CD4-positive, alpha-beta memory T cell (primary cell): ENCODE measurements at regions of chr3 and their contacts with region 1.

Region 1: DNA sequence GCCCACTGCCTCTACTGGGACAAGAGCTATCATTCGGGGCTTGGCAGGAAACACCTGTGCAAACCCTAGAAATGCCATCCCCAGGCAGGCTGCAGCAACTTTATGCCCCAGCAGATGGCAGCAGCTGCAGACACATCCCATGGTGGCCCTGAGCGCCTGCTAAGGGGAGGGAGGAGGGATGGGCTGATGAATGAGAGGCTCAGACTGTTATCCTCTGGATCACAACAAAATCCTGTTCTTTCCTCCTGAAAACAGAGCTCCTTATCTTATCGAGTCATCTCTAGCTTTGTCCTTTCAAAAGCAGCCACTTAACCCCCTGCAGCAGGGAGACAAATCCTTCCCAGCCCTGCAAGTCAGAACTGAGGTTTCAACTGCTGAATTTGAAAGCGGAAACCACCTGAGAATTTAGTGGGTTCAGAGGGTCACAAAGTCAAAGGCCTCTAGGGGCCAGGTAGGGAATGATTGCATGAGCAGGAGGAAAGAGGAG is 90.6 kb upstream of the PROK2 start:
- DNase-seq: peak; percentile 65 to 73 (median 68)
- H3K4me3 ChIP-seq: no peak overlapping the region
- H3K4me3 Mint-ChIP-seq: peak overlapping the region in 1 of 8 donors; percentile 43
- H3K27ac ChIP-seq: no peak overlapping the region
- H3K27ac Mint-ChIP-seq: no peak overlapping the region
- H3K4me1 ChIP-seq: peaks cover 26% of the 10 kb centered on the region
- H3K4me1 Mint-ChIP-seq: peaks cover 18 to 24% (median 20%) of the 10 kb centered on the region in 4 donors
- H3K27me3 ChIP-seq: no peaks in the 10 kb centered on the region
- H3K27me3 Mint-ChIP-seq: peaks cover 3 to 5% of the 10 kb centered on the region in 2 donors

Region 2: DNA sequence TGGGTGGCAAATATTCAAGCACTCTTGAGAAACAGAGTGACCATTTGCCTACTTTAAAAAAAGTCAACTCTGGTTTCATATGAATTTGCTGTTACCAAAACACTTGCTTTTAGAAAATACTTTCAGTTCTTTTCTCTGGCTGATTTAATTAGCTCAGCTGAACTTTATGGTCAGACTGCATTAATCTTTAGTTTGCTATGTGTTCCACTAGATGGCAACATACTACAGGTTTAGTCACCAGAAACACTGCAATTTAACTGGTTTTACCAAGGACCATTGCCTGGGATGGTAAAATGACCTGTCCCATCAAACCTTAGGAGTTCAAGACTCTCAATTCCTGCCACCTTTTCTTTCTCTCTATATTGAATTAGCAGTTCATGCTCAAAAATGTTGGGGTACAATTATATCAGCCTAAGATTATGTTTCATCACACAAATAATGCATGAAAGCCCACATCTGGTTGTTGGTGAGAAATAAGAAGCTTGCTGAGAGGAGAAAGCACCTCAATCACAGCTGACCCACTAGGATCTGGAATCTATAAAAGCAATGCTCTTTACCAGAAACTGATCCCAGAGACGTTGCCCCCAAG is 164.5 kb before region 1 on chr3:
- CTCF ChIA-PET with region 1: interaction called, 24 read pairs
- POLR2A ChIA-PET with region 1: interaction called, 5 read pairs
- intact Hi-C with region 1: loop called (anchors 1 kb)
- DNase-seq: peak in 4 of 5 donors; percentile 50 to 59 (median 56)
- H3K4me3 ChIP-seq: no peak overlapping the region
- H3K4me3 Mint-ChIP-seq: peak overlapping the region in 3 of 8 donors; percentile 25 to 47 (median 25)
- H3K27ac ChIP-seq: no peak overlapping the region
- H3K27ac Mint-ChIP-seq: peak overlapping the region in 3 of 7 donors; percentile 80 to 83 (median 81)
- H3K4me1 ChIP-seq: peaks cover 87% of the 10 kb centered on the region
- H3K4me1 Mint-ChIP-seq: peaks cover 66 to 92% (median 74%) of the 10 kb centered on the region in 4 donors
- H3K27me3 ChIP-seq: no peaks in the 10 kb centered on the region
- H3K27me3 Mint-ChIP-seq: no peaks in the 10 kb centered on the region

Region 3: GRCh38 chr3:71854096-71854495 is 21.4 kb before region 1 on chr3:
- CTCF ChIA-PET with region 1: interaction called, 33 read pairs
- POLR2A ChIA-PET with region 1: no interaction called
- intact Hi-C with region 1: no loop called
- DNase-seq: no peak
- H3K4me3 ChIP-seq: no peak overlapping the region
- H3K4me3 Mint-ChIP-seq: no peak overlapping the region
- H3K27ac ChIP-seq: no peak overlapping the region
- H3K27ac Mint-ChIP-seq: no peak overlapping the region
- H3K4me1 ChIP-seq: peaks cover 7% of the 10 kb centered on the region
- H3K4me1 Mint-ChIP-seq: peaks cover 3 to 8% (median 6%) of the 10 kb centered on the region in 4 donors
- H3K27me3 ChIP-seq: no peaks in the 10 kb centered on the region
- H3K27me3 Mint-ChIP-seq: peaks cover 2 to 6% of the 10 kb centered on the region in 2 donors

Region 4: GRCh38 chr3:71859123-71859519 is 16.4 kb before region 1 on chr3:
- CTCF ChIA-PET with region 1: interaction called, 33 read pairs
- POLR2A ChIA-PET with region 1: no interaction called
- intact Hi-C with region 1: no loop called
- DNase-seq: peak; percentile 33 to 68 (median 64)
- H3K4me3 ChIP-seq: no peak overlapping the region
- H3K4me3 Mint-ChIP-seq: peak overlapping the region in 1 of 8 donors; percentile 21
- H3K27ac ChIP-seq: no peak overlapping the region
- H3K27ac Mint-ChIP-seq: peak overlapping the region in 1 of 7 donors; percentile 33
- H3K4me1 ChIP-seq: peaks cover 7% of the 10 kb centered on the region
- H3K4me1 Mint-ChIP-seq: peaks cover 5 to 11% (median 7%) of the 10 kb centered on the region in 4 donors
- H3K27me3 ChIP-seq: no peaks in the 10 kb centered on the region
- H3K27me3 Mint-ChIP-seq: peaks cover 17 to 26% of the 10 kb centered on the region in 2 donors

Region 5: GRCh38 chr3:71891483-71891882 is 16.0 kb after region 1 on chr3:
- CTCF ChIA-PET with region 1: interaction called, 17 read pairs
- POLR2A ChIA-PET with region 1: no interaction called
- intact Hi-C with region 1: no loop called
- DNase-seq: no peak
- H3K4me3 ChIP-seq: no peak overlapping the region
- H3K4me3 Mint-ChIP-seq: no peak overlapping the region
- H3K27ac ChIP-seq: no peak overlapping the region
- H3K27ac Mint-ChIP-seq: no peak overlapping the region
- H3K4me1 ChIP-seq: no peaks in the 10 kb centered on the region
- H3K4me1 Mint-ChIP-seq: no peaks in the 10 kb centered on the region
- H3K27me3 ChIP-seq: no peaks in the 10 kb centered on the region
- H3K27me3 Mint-ChIP-seq: peaks cover 0 to 13% of the 10 kb centered on the region in 2 donors